ENCODE measurements at regions of chr19 and their contacts with region 1.

Region 1: GRCh38 chr19:48321622-48322591 is 3.4 kb upstream of the EMP3 start:
- DNase-seq: peak; percentile 94 to 99
- ATAC-seq: peak; percentile 67 to 74
- H3K4me3 ChIP-seq: peak overlapping the region; percentile 57
- H3K27ac ChIP-seq: peak overlapping the region; percentile 92 to 94
- H3K4me1 ChIP-seq: peaks cover 45% of the 10 kb centered on the region
- CTCF ChIP-seq: no peak
- EP300 ChIP-seq: no peak
- POLR2A ChIP-seq: peak; percentile 72
- RAD21 ChIP-seq: 0 out of 5 replicates have a peak, but pooled peaks of 1 of the 2 experiments have one; percentile 6

Region 2: GRCh38 chr19:48203732-48204628 is 117.9 kb before region 1 on chr19:
- CTCF ChIA-PET with region 1: no interaction called
- POLR2A ChIA-PET with region 1: interaction called, 10 read pairs
- DNase-seq: peak; percentile 98 to 99
- ATAC-seq: peak; percentile 99
- H3K4me3 ChIP-seq: peak overlapping the region; percentile 71
- H3K27ac ChIP-seq: peak overlapping the region; percentile 85 to 90
- H3K4me1 ChIP-seq: peaks cover 9% of the 10 kb centered on the region; the same call in 2 of the 3 replicates
- CTCF ChIP-seq: no peak
- EP300 ChIP-seq: no peak
- POLR2A ChIP-seq: peak; percentile 81
- RAD21 ChIP-seq: no peak

Region 3: GRCh38 chr19:48218997-48219396 is 102.9 kb before region 1 on chr19:
- CTCF ChIA-PET with region 1: no interaction called
- POLR2A ChIA-PET with region 1: no interaction called
- DNase-seq: no peak
- ATAC-seq: no peak
- H3K4me3 ChIP-seq: no peak overlapping the region
- H3K27ac ChIP-seq: no peak overlapping the region
- H3K4me1 ChIP-seq: no peaks in the 10 kb centered on the region
- CTCF ChIP-seq: no peak
- EP300 ChIP-seq: no peak
- POLR2A ChIP-seq: no peak
- RAD21 ChIP-seq: no peak

Region 4: DNA sequence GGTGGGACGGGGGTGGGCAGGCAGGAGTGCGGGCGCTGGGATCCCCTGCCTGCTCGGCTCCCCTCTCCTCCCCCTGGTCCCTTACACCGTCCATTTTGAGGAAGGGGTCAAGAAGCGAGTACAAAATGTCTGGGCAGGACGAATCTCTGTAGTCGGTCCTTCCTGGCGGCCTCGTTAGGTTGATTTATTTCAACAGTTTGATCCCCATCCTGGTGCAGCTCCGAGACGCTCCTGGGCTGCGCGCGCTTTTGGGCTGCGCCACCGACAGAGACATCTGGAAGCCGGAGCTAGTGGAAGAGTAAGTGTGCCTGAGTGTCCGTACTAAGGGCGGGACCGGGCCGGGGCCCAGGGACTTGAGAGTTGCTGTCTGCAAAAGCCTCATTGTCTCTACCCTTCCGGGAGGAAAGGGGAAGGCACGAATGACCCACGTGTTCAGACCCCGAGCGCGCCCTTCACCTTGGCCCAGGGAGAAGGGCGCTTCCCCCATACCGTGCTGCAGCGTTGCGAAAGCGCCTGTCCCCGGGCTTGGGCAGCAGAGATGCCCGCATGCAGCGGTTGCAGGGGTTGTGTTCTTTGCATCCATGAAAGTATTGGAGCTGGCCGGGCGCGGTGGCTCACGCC is 50.3 kb before region 1 on chr19:
- CTCF ChIA-PET with region 1: interaction called, 15 read pairs
- POLR2A ChIA-PET with region 1: interaction called, 6 read pairs
- DNase-seq: peak; percentile 75 to 90
- ATAC-seq: peak; percentile 85 to 87
- H3K4me3 ChIP-seq: peak overlapping the region; percentile 64
- H3K27ac ChIP-seq: peak overlapping the region; percentile 80 to 89
- H3K4me1 ChIP-seq: 0 out of 3 replicates have a peak, but pooled peaks cover 11% of the 10 kb centered on the region
- CTCF ChIP-seq: no peak
- EP300 ChIP-seq: no peak
- POLR2A ChIP-seq: no peak; the same call in 1 of the 2 replicates
- RAD21 ChIP-seq: no peak

Region 5: GRCh38 chr19:48296963-48297734 is 24.8 kb before region 1 on chr19:
- CTCF ChIA-PET with region 1: interaction called, 16 read pairs
- POLR2A ChIA-PET with region 1: no interaction called
- DNase-seq: no peak
- ATAC-seq: peak; percentile 28 to 33; a peak in 3 of 6 replicates
- H3K4me3 ChIP-seq: no peak overlapping the region
- H3K27ac ChIP-seq: no peak overlapping the region
- H3K4me1 ChIP-seq: no peaks in the 10 kb centered on the region
- CTCF ChIP-seq: no peak
- EP300 ChIP-seq: no peak
- POLR2A ChIP-seq: no peak
- RAD21 ChIP-seq: no peak

Region 6: DNA sequence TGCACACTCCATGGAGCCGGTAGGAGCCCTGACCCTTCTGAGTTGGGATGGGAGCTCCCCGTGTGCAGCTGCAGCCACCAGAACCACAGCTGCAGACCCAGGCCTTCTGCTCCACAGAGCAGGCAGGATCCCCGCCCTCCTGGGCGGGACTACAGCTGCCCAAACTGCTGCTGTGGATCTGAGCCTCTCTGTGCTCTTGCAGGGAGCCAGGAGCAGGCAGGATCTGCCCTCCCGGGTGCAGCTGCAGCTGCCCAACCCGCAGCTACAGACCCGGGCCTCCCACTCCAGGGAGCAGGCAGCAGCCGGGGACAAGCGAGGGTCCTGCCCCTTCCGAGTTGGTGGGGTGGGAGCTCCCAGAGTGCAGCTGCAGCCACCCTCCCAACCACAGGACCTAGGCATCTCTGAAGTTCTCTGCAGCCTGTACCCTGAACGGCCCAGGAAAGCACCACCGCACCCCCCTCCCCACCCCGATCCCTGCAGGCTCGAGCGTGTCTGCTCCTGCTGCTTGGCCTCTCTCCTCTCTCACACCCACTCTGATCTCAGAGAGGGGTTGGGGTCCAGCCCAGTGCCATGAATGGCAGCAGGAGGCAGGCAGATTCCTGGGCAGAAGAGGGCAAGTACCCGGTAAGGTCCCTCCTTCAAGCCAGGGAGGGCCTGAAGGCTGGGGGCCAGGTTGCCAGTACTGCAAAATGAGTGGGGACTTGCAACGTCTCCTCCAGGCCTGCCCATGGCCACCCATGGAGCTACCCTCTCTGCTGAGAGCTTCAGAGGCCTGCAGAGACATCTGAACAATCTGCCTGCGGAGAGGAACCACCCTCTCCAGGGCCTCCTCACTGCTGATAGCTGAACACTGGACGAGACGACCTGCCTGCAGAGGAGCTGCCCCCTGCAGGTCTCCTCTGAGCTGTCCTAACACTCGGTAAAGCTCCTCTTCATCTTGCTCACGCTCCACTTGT is 13.0 kb before region 1 on chr19:
- CTCF ChIA-PET with region 1: interaction called, 416 read pairs
- POLR2A ChIA-PET with region 1: no interaction called
- DNase-seq: peak in 1 of 2 experiments; percentile 56
- ATAC-seq: peak; percentile 80 to 93
- H3K4me3 ChIP-seq: no peak overlapping the region
- H3K27ac ChIP-seq: no peak overlapping the region
- H3K4me1 ChIP-seq: peaks cover 5% of the 10 kb centered on the region; the same call in 1 of the 3 replicates
- CTCF ChIP-seq: peak; percentile 42
- EP300 ChIP-seq: no peak
- POLR2A ChIP-seq: no peak
- RAD21 ChIP-seq: peak in 1 of 2 experiments; percentile 17; a peak in 2 of 5 replicates

Region 7: DNA sequence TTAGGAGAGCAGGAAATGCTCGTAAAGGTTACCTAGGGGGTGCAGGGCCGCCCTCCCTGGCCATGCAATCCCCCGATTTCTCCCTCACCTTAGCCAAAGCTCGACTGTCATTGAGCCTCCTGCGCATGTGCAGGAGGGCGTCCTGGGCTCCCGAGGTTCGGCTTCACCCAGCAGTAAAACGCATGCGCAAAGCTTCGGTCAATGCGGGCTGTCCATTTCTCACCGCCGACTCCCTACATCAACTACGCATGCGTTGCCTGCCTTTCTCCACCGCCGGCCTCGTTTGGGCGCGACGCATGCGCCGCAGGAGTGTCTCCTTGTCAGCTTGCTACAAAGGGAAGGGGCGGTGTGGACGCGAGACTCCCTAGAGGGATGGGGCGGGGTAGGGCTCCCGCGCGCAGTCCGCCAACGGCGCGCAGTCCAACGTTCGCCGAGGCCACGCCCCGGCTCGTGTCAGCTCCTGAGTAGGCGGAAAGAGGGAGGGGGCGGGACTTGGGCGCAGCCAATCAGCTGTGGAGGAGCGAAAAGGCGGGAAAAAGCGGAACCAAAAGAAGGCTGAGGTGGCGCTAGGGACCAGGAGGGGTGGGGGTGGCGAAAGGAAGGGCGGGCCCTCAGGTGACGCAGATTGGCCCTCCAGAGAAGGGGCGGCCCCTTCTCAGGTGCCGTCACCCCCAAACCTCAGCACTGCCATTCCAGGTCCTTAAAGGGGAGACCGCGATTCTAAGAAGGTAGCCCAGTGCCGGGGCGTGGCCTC is 42.1 kb after region 1 on chr19 and contains the starts of genes SYNGR4 and TMEM143:
- CTCF ChIA-PET with region 1: interaction called, 8 read pairs
- POLR2A ChIA-PET with region 1: interaction called, 10 read pairs
- DNase-seq: peak; percentile 100
- ATAC-seq: peak; percentile 75 to 89
- H3K4me3 ChIP-seq: peak within 1 kb of the TSS; percentile 51
- H3K27ac ChIP-seq: peak within 1 kb of the TSS; percentile 90 to 97
- H3K4me1 ChIP-seq: peaks cover 8% of the 10 kb centered on the region
- CTCF ChIP-seq: no peak
- EP300 ChIP-seq: no peak
- POLR2A ChIP-seq: peak; percentile 70
- RAD21 ChIP-seq: no peak
- polyA plus RNA-seq, gene SYNGR4: 2.3 and 2.9 TPM in 2 replicates
- polyA plus RNA-seq, gene TMEM143: 7.4 and 7.6 TPM in 2 replicates

Region 8: GRCh38 chr19:48608798-48609263 is 286.9 kb after region 1 on chr19:
- CTCF ChIA-PET with region 1: interaction called, 32 read pairs
- POLR2A ChIA-PET with region 1: no interaction called
- DNase-seq: peak; percentile 83 to 88
- ATAC-seq: peak; percentile 75 to 82
- H3K4me3 ChIP-seq: no peak overlapping the region
- H3K27ac ChIP-seq: peak overlapping the region; percentile 65 to 78
- H3K4me1 ChIP-seq: peaks cover 5% of the 10 kb centered on the region; the same call in 1 of the 3 replicates
- CTCF ChIP-seq: peak; percentile 92
- EP300 ChIP-seq: no peak
- POLR2A ChIP-seq: no peak
- RAD21 ChIP-seq: peak; percentile 94 to 98